CD8-positive, alpha-beta memory T cell (primary cell): ENCODE measurements at regions of chr1 and their contacts with region 1.

Region 1: GRCh38 chr1:21200767-21201166 is 24.1 kb upstream of the EIF4G3 start:
- DNase-seq: no peak
- H3K4me3 ChIP-seq: no peak overlapping the region
- H3K4me3 Mint-ChIP-seq: no peak overlapping the region
- H3K27ac ChIP-seq: no peak overlapping the region
- H3K27ac Mint-ChIP-seq: no peak overlapping the region
- H3K4me1 ChIP-seq: no peaks in the 10 kb centered on the region
- H3K4me1 Mint-ChIP-seq: no peaks in the 10 kb centered on the region
- H3K27me3 ChIP-seq: no peaks in the 10 kb centered on the region
- H3K27me3 Mint-ChIP-seq: peaks cover 16% of the 10 kb centered on the region in 2 donors

Region 2: GRCh38 chr1:20981915-20982314 is 218.9 kb before region 1 on chr1:
- CTCF ChIA-PET with region 1: interaction called, 12 read pairs
- POLR2A ChIA-PET with region 1: no interaction called
- DNase-seq: no peak
- H3K4me3 ChIP-seq: no peak overlapping the region
- H3K4me3 Mint-ChIP-seq: no peak overlapping the region
- H3K27ac ChIP-seq: no peak overlapping the region
- H3K27ac Mint-ChIP-seq: peak overlapping the region in 1 of 8 donors; percentile 5
- H3K4me1 ChIP-seq: no peaks in the 10 kb centered on the region
- H3K4me1 Mint-ChIP-seq: peaks cover 0 to 1% (median 0%) of the 10 kb centered on the region in 3 donors
- H3K27me3 ChIP-seq: no peaks in the 10 kb centered on the region
- H3K27me3 Mint-ChIP-seq: no peaks in the 10 kb centered on the region

Region 3: GRCh38 chr1:21184276-21184675 is 16.5 kb before region 1 on chr1:
- CTCF ChIA-PET with region 1: interaction called, 23 read pairs
- POLR2A ChIA-PET with region 1: interaction called, 7 read pairs
- DNase-seq: no peak
- H3K4me3 ChIP-seq: no peak overlapping the region
- H3K4me3 Mint-ChIP-seq: no peak overlapping the region
- H3K27ac ChIP-seq: no peak overlapping the region
- H3K27ac Mint-ChIP-seq: peak overlapping the region in 1 of 8 donors; percentile 32
- H3K4me1 ChIP-seq: no peaks in the 10 kb centered on the region
- H3K4me1 Mint-ChIP-seq: no peaks in the 10 kb centered on the region
- H3K27me3 ChIP-seq: no peaks in the 10 kb centered on the region
- H3K27me3 Mint-ChIP-seq: peaks cover 0 to 5% of the 10 kb centered on the region in 2 donors